ENCODE measurements at regions of chr5 and their contacts with region 1.

Region 1: DNA sequence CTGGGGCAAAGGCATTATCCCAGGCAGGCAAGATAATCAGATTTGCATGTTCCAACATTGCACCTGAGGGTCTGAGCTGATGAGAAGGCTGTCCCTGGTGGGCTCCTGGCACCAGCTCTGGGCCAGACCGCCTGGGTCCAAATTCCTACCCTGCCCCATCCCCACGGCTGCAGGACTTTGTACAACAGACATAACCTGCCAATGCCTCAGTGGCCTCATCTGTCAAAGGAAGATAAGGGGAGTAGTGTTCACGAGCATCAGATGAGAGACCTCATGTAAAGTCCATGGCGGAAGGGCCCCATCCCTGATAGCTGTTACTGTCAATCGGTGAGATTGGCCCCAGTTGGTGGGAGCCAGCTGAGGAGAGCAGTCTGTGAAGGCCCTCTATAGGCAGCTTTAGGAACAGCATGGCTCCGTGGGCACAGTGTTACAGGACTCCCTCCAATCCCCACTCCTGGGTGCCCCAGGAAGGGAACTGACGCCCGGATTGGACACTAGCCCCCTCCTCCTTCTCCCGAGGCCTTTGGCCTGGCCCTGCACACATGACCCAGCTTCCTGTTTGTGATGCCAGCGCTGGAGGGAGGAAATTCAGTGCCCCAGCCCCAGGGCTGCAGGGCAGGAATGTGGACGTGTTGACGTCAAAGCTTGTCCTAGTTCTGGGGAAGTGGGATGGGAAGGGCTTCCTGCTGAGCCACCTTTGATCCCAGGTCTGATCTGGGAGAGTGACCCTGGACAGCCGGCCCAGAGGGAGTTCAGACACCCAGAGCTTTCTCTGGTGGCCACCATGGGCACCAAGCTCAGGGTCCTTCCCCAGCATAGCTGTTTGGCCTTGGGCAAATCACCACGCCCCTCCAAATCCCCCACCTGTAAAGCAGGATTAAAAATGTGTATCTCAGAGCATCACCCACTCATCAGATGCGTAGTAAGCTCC is 56.2 kb downstream of the DUSP1 start:
- DNase-seq: peak; percentile 78
- H3K4me3 ChIP-seq: no peak overlapping the region
- H3K27ac ChIP-seq: peak overlapping the region; percentile 42 to 61 (median 51)
- H3K4me1 ChIP-seq: peaks cover 5 to 25% (median 7%) of the 10 kb centered on the region in 4 donors
- H3K27me3 ChIP-seq: peaks cover 9% of the 10 kb centered on the region
- CTCF ChIP-seq: peak; percentile 85 to 91 (median 91)
- EP300 ChIP-seq: peak; percentile 55
- POLR2A ChIP-seq: no peak

Region 2: DNA sequence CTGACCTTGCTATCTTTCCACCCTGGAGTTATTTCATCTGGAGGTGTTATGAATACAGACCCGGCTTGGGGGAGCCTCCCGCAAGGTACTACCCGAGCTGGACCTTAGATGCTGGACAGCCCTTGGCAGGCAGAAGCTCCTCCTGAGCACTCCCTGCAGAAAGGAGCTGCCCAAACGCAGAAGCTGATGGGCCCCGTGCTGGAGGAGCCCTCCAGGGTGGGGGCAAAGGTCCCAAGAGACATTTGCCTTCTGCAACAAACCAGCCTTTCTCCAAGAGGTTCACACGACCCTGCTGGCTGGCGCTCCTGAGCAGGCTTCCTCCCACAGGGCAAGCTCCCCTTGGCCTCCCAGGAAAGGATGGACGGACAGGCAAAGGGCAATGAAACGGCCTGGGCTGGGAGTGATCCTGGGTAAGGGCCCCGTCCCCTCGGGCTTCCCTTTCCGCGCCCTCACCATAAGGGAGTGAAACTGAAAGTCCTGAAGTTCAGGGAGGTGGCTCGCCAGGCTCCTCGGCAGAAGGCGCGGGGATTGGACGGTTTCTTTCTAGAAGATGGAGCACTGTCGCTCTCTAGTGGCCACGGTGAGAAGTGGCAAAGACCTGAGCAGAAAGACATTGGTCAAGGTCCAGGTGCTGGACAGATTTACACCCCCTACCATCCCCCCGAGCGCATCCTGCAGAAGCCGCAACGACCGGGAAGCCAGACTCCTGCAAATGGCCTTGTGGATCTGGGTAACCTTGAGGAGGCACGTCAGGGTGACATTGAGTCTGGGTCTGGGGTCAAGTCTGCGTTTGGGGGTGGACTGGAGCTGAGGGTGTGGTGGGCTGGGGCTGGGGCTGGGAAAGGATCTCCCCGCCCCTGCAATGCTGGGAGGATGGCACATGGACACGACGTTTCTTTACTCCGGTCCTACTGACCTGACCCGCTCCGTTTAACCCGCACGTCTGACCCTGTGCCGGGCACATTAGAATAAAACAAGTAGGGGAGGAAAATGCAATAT is 17.3 kb before region 1 on chr5:
- in situ Hi-C with region 1: no loop called
- intact Hi-C with region 1: no loop called
- DNase-seq: peak; percentile 93
- H3K4me3 ChIP-seq: peak overlapping the region; percentile 44 to 68 (median 50)
- H3K27ac ChIP-seq: peak overlapping the region; percentile 78 to 87 (median 82)
- H3K4me1 ChIP-seq: peaks cover 9 to 38% (median 26%) of the 10 kb centered on the region in 4 donors
- H3K27me3 ChIP-seq: peaks cover 10% of the 10 kb centered on the region
- CTCF ChIP-seq: peak; percentile 83 to 99 (median 90)
- EP300 ChIP-seq: no peak
- POLR2A ChIP-seq: peak; percentile 57

Region 3: GRCh38 chr5:172764849-172765765 is 50.4 kb after region 1 on chr5:
- in situ Hi-C with region 1: no loop called
- intact Hi-C with region 1: loop called (anchors 5 kb)
- DNase-seq: peak; percentile 95
- H3K4me3 ChIP-seq: peak overlapping the region; percentile 8 to 98 (median 20)
- H3K27ac ChIP-seq: peak overlapping the region; percentile 99 to 100 (median 100)
- H3K4me1 ChIP-seq: peaks cover 7 to 45% (median 24%) of the 10 kb centered on the region in 4 donors
- H3K27me3 ChIP-seq: no peaks in the 10 kb centered on the region
- CTCF ChIP-seq: peak in 2 of 5 experiments; percentile 18 to 29
- EP300 ChIP-seq: peak; percentile 86
- POLR2A ChIP-seq: peak; percentile 59

Region 4: DNA sequence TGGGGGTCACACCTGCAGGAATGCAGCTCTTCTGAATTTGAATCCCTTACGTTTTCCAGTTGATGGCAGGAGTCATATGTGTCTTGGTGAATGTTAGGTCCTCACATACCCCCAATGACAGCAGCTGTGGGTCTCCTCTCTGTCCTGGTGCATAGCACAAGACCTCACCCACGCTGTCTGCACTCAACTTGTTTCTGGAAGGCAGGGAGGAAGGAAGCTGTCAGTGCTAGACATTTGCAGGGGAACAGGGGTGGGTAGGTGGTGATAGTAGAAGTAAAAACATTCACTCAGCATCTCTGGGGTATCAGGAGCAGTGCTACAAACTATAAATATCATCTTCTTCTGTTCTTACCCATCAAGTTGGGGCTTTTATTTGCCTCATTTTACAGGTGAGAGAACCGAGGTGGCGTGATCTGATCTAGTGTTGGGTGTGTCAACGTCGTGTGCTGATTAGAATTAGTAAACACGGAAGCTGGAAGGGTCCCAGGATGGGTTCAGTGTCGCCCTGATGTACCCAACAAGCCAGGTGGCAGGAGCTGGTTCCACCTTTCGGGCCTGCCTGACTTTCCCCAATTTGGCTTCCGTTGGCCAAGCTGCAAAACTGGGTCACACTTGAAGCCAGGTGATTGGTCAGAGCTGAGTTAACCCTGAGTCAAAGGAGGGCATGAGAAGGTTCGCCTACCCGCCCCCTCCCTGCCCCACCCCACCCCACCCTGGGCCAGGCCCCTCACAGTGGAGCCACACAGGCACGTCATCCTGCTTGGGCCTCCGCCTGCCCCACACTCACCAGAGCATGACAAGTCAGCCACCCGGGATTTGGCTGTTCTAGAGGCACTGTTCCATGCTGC is 135.1 kb after region 1 on chr5:
- in situ Hi-C with region 1: no loop called
- intact Hi-C with region 1: no loop called
- DNase-seq: peak; percentile 77
- H3K4me3 ChIP-seq: no peak overlapping the region
- H3K27ac ChIP-seq: peak overlapping the region; percentile 59 to 83 (median 73)
- H3K4me1 ChIP-seq: peaks cover 25 to 85% (median 67%) of the 10 kb centered on the region in 4 donors
- H3K27me3 ChIP-seq: no peaks in the 10 kb centered on the region
- CTCF ChIP-seq: no peak
- EP300 ChIP-seq: peak; percentile 42
- POLR2A ChIP-seq: no peak

Region 5: DNA sequence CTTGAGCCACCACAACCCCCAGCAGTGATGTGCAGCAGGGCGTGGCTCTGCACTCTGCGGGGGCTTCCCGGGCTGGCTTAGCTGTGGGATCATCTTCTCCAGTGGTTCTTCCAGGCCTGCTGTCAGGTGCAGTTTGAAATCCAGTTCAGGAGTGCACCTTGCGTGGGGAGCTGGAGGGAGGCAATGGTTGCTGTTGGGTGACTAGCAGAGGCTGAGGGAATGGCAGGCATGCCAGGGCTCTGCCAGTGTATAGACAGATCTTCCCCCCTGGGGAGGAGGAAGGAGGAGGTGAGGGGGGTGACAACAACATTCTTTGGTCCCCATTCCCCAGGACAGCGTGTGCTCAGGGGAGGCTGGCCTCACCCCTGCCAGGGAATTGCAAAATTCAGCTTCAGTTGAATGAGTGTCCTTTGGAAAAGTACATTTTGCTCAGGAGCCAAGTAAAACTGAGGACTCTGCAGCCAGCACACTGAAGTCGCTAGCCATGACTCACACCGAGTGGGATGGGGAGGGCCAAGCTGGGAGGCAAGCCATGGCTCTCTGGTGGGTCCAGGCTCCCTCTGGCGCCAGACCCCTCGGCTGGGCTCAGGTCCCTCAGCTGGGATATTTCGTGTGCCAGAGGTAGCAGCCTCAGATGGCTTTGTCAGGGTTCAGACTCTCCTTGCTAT is 154.3 kb after region 1 on chr5:
- in situ Hi-C with region 1: no loop called
- intact Hi-C with region 1: loop called (anchors 10 kb)
- DNase-seq: peak; percentile 67
- H3K4me3 ChIP-seq: no peak overlapping the region
- H3K27ac ChIP-seq: peak overlapping the region; percentile 74 to 91 (median 86)
- H3K4me1 ChIP-seq: peaks cover 43 to 61% (median 53%) of the 10 kb centered on the region in 4 donors
- H3K27me3 ChIP-seq: no peaks in the 10 kb centered on the region
- CTCF ChIP-seq: peak in 2 of 5 experiments; percentile 16 to 17
- EP300 ChIP-seq: peak; percentile 96
- POLR2A ChIP-seq: peak; percentile 6

Region 6: DNA sequence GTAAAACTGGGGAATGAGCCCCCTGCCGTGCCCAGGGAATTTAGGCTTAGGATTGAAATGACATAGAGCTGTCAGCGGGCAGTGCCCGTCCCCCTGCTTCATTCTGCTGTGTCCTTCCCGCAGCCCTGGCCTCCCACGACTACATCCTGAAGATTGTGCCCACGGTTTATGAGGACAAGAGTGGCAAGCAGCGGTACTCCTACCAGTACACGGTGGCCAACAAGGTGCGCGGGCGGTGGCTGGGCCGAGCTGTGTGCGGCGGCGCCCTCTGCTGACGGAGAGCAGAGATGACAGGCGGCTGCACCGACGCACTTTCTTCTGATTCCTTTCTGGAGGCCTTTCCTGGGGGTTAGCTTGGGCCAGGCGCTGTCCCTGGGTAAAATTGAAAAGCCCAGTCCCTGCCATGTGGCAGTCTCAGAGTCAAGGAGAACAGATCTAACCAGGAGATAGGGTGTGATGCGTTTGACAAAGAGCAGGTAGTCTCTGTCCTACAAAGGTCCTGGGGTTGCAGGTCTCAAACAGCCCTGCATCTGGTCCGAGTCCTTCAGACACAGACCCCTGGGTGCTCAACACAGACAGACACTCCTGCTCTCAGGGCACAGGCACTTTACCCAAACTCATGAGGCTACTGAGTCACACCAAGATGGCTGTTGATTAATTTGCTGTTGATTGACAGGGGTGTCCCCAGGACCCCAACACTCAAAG is 217.7 kb after region 1 on chr5:
- in situ Hi-C with region 1: loop called (anchors 5 to 10 kb)
- intact Hi-C with region 1: loop called (anchors 2 kb)
- DNase-seq: peak; percentile 77
- H3K4me3 ChIP-seq: no peak overlapping the region
- H3K27ac ChIP-seq: peak overlapping the region in 2 of 4 donors; percentile 33 to 44
- H3K4me1 ChIP-seq: peaks cover 0 to 4% (median 0%) of the 10 kb centered on the region in 4 donors
- H3K27me3 ChIP-seq: no peaks in the 10 kb centered on the region
- CTCF ChIP-seq: peak; percentile 95 to 98 (median 96)
- EP300 ChIP-seq: no peak
- POLR2A ChIP-seq: no peak

Region 7: DNA sequence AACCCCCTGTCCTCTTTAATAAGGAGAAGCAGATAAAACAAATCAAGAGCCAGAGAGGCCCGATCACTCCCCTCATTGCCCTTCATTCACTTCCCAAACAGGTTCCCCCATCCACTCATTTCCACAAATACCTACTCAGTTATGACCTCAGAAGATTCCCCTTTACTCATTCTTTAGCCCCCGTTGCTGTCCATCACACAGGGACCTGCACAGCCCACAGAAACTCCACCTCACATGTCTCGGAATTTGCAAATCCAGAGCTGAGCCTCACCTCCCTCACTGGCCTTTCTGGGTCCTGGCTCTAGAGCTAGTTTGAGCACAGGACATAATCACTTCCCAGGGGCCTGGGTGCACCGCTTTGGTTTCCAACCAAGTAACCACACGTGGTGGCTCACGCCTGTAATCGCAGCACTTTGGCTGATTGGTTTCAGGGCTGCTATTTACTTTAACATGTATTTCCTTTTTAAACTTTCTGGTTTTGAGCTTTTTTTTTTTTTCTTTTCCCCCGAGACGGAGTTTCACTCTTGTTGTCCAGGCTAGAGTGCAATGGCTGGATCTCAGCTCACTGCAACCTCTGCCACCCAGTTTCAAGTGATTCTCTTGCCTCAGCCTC is 286.6 kb after region 1 on chr5:
- in situ Hi-C with region 1: no loop called
- intact Hi-C with region 1: no loop called
- DNase-seq: no peak
- H3K4me3 ChIP-seq: no peak overlapping the region
- H3K27ac ChIP-seq: no peak overlapping the region
- H3K4me1 ChIP-seq: peaks cover 7 to 50% (median 11%) of the 10 kb centered on the region in 4 donors
- H3K27me3 ChIP-seq: no peaks in the 10 kb centered on the region
- CTCF ChIP-seq: no peak
- EP300 ChIP-seq: no peak
- POLR2A ChIP-seq: no peak

Region 8: DNA sequence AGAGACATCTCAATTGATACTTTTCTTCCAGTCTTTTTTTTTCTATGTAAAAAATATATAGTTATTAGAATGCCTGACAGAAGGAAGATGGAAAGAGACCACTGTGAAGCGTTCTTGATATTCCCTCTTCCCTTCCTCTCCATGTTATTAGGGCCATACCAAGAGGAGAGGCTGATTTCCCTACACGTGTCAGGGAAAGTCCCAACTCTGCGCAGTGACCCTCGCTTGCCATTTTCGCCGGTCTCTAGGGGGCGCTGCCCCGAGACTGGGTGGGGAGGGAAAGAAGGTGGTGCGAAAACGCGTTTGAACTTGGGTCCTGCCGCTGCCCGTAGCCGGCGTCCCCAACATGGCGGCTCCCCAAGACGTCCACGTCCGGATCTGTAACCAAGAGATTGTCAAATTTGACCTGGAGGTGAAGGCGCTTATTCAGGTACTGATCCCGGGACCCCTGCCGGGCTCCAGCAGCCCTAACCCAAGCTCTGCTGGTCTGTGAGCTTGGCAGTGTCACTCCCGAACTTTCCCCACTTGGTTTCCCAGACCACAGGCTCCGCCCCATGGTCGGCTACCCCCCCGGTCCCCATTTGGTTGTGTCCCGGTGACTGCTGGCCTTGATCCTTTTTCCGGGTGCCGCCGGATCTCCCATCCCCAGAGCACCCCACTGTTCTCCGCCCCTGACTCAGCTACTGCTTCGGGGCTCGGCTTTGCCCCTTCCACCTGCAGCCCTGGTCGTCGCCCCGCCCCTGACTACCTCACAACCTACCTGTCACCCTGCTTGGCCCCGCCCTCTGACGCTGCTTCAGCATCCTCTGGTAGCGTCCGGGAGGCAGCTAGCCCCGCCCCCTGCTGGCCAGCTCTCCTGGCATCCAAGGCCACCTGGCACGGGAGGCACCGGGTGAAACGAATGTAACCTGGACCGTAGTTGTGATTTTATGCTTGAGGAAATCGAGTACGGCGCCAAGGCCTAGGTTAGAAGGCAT is 429.7 kb after region 1 on chr5 and contains the start of gene BNIP1:
- in situ Hi-C with region 1: loop called in 2 of 4 experiments (anchors 25 kb)
- intact Hi-C with region 1: no loop called
- DNase-seq: peak; percentile 99
- H3K4me3 ChIP-seq: peak within 1 kb of the TSS; percentile 59 to 96 (median 77)
- H3K27ac ChIP-seq: peak within 1 kb of the TSS; percentile 87 to 95 (median 90)
- H3K4me1 ChIP-seq: peaks cover 0 to 13% (median 6%) of the 10 kb centered on the region in 4 donors
- H3K27me3 ChIP-seq: no peaks in the 10 kb centered on the region
- CTCF ChIP-seq: peak; percentile 86 to 97 (median 92)
- EP300 ChIP-seq: no peak
- POLR2A ChIP-seq: peak; percentile 75
- total RNA-seq, gene BNIP1: 6.0 to 7.2 TPM in 2 of 4 donors, not detected in the others